Mucosa of descending colon (tissue), 3 donors: ENCODE measurements at regions of chrX and their contacts with region 1.

Region 1: DNA sequence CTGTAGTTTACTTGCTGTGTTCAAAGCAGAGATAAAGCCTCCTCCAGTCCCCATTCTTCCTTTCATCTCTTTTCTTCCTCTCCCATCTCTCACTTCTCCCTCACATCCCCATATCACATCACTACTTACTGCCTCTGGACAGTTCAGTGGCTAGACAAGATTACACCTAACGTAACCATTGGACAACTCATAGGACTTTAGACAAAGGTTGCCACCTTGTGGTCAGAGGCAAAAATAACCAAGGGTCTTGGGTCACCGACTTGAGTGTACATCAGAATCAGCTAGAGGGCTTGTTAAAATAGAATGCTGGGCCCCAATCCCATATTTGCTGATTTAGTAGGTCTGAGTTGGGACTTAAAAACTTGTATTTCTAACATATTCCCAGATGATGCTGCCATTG is 109.3 kb upstream of the DGKK start:
- DNase-seq: peak in 1 of 3 donors; percentile 47
- ATAC-seq: peak; percentile 74
- H3K4me3 ChIP-seq: no peak overlapping the region
- H3K4me1 ChIP-seq: no peaks in the 10 kb centered on the region
- CTCF ChIP-seq: no peak

Region 2: GRCh38 chrX:49915361-49916222 is 664.4 kb before region 1 on chrX:
- intact Hi-C with region 1: loop called in 1 of 2 experiments (anchors 10 kb)
- DNase-seq: peak in 1 of 3 donors; percentile 49
- ATAC-seq: peak; percentile 80
- H3K4me3 ChIP-seq: no peak overlapping the region
- H3K4me1 ChIP-seq: no peaks in the 10 kb centered on the region
- CTCF ChIP-seq: peak; percentile 43

Region 3: DNA sequence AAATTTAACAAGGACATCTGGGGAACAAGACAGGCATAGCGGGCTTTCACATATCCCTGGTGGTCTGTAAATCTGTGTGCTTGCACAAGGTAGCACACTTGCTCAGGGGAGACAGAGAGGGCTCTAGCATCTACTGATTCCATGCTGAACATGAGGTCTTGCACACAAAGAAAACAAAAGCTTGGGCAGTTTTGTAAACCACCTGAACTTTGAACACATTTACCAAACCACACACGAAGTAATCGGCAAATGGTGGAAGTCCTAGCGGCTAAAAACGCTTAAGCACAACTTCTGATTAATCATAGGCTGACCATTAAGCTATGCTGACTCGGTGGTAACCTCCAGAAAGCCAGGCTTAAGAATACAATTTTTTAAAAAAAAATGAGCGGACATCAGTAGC is 432.0 kb before region 1 on chrX:
- intact Hi-C with region 1: no loop called
- DNase-seq: no peak
- ATAC-seq: no peak
- H3K4me3 ChIP-seq: no peak overlapping the region
- H3K4me1 ChIP-seq: no peaks in the 10 kb centered on the region
- CTCF ChIP-seq: no peak

Region 4: GRCh38 chrX:50470103-50471031 is 109.6 kb before region 1 on chrX and contains the start of gene DGKK:
- intact Hi-C with region 1: no loop called
- DNase-seq: peak in 1 of 3 donors; percentile 47
- ATAC-seq: no peak
- H3K4me3 ChIP-seq: no peak within 1 kb of the TSS
- H3K4me1 ChIP-seq: no peaks in the 10 kb centered on the region
- CTCF ChIP-seq: no peak
- total RNA-seq, gene DGKK: not detected

Region 5: DNA sequence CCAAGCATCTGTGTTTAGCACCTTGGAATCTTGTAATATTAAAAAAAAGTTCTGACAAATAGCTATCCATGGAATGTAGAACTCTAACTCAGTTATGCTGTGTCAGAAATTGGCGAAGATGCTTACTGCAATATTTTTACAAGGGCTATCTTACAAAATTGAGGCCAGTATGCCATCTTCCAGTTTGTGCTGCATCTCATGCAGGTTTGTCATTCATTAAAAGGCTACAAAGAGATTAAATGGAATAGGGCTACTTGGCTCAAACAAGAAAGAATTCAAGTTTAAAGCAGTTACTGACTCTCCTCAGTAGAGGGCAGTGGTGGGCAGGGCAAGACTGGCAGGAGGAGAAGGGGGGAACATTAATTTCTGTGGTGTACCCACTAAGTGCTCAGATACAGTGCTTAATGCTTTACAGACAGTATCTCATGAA is 167.5 kb after region 1 on chrX:
- intact Hi-C with region 1: no loop called
- DNase-seq: no peak
- ATAC-seq: peak; percentile 53
- H3K4me3 ChIP-seq: no peak overlapping the region
- H3K4me1 ChIP-seq: no peaks in the 10 kb centered on the region
- CTCF ChIP-seq: no peak